AG04450 (cell line): ENCODE measurements at regions of chr3 and their contacts with region 1.

Region 1: GRCh38 chr3:120488296-120488695 is 37.5 kb upstream of the FSTL1 start:
- DNase-seq: no peak
- H3K4me3 ChIP-seq: no peak overlapping the region
- H3K27ac ChIP-seq: no peak overlapping the region
- H3K27me3 ChIP-seq: no peaks in the 10 kb centered on the region
- CTCF ChIP-seq: no peak

Region 2: DNA sequence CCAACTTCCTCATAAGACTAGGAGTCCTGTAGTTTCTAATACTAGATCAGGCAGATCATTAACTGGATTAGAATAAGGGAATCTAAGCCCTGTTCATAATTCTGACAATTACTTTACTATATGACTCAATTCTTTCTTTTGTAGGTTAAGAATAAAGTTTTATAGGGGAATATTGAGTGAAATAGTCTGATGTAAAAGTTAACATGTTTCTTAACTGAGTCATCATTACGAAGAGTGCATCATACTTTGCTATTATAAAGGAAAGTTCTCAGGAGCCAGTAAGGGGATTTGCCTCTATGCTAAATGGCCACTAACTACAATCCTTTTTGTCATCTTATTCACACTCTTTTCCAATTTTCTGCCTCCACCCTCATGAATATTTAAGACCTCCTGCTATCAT is 994.4 kb after region 1 on chr3:
- CTCF ChIA-PET with region 1: no interaction called
- POLR2A ChIA-PET with region 1: interaction called, 10 read pairs
- DNase-seq: peak; percentile 38
- H3K4me3 ChIP-seq: no peak overlapping the region
- H3K27ac ChIP-seq: no peak overlapping the region
- H3K27me3 ChIP-seq: no peaks in the 10 kb centered on the region
- CTCF ChIP-seq: no peak